ENCODE measurements at regions of chr20 and their contacts with region 1.

Region 1: GRCh38 chr20:33373735-33374605 is 27.3 kb downstream of the CDK5RAP1 start:
- DNase-seq: peak; percentile 65 to 72
- H3K4me3 ChIP-seq: no peak overlapping the region
- H3K4me3 Mint-ChIP-seq: no peak overlapping the region
- H3K27ac Mint-ChIP-seq: peak overlapping the region; percentile 24
- H3K4me1 ChIP-seq: peaks cover 11% of the 10 kb centered on the region
- H3K4me1 Mint-ChIP-seq: peaks cover 20% of the 10 kb centered on the region
- H3K27me3 ChIP-seq: no peaks in the 10 kb centered on the region
- H3K27me3 Mint-ChIP-seq: no peaks in the 10 kb centered on the region
- CTCF ChIP-seq: no peak

Region 2: GRCh38 chr20:33337531-33338165 is 36.3 kb before region 1 on chr20:
- CTCF ChIA-PET with region 1: no interaction called
- POLR2A ChIA-PET with region 1: no interaction called
- intact Hi-C with region 1: loop called (anchors 5 kb)
- DNase-seq: no peak
- H3K4me3 ChIP-seq: no peak overlapping the region
- H3K4me3 Mint-ChIP-seq: no peak overlapping the region
- H3K27ac Mint-ChIP-seq: no peak overlapping the region
- H3K4me1 ChIP-seq: no peaks in the 10 kb centered on the region
- H3K4me1 Mint-ChIP-seq: no peaks in the 10 kb centered on the region
- H3K27me3 ChIP-seq: no peaks in the 10 kb centered on the region
- H3K27me3 Mint-ChIP-seq: peaks cover 8% of the 10 kb centered on the region
- CTCF ChIP-seq: no peak